ENCODE measurements at regions of chr20 and their contacts with region 1.

Region 1: DNA sequence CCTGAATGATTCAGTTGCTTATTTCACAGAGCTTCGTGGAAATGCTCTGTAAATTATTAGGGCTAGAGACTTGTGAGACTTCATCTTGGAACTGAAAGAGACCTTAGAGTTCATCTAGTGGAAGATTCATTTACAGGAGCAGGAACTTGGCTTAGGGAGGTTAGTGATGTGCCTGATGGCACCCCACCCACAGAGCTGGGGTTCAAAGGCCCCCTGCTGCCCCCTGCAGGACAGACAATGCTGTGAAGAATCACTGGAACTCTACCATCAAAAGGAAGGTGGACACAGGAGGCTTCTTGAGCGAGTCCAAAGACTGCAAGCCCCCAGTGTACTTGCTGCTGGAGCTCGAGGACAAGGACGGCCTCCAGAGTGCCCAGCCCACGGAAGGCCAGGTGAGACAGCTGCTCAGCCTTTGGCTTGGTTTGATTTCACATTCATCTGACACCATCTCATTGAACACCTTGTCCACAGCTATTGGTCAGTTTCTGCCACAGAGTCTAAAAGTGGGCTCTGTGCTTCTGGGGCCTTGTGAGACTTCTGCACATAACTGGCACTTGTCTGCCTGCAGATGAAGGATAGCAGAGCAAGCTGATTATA is 25.1 kb downstream of the MYBL2 start:
- DNase-seq: no peak
- ATAC-seq: peak; percentile 98
- H3K4me3 ChIP-seq: no peak overlapping the region
- H3K27ac ChIP-seq: no peak overlapping the region
- H3K4me1 ChIP-seq: no peaks in the 10 kb centered on the region
- H3K27me3 ChIP-seq: no peaks in the 10 kb centered on the region
- CTCF ChIP-seq: peak; percentile 74 to 79 (median 76)
- EP300 ChIP-seq: no peak
- POLR2A ChIP-seq: no peak
- RAD21 ChIP-seq: peak; percentile 88

Region 2: GRCh38 chr20:43472671-43473380 is 219.2 kb before region 1 on chr20:
- CTCF ChIA-PET with region 1: no interaction called
- POLR2A ChIA-PET with region 1: no interaction called
- RAD21 ChIA-PET with region 1: no interaction called
- SMC1A ChIA-PET with region 1: no interaction called
- in situ Hi-C with region 1: no loop called
- intact Hi-C with region 1: no loop called
- DNase-seq: no peak
- ATAC-seq: no peak
- H3K4me3 ChIP-seq: no peak overlapping the region
- H3K27ac ChIP-seq: no peak overlapping the region
- H3K4me1 ChIP-seq: no peaks in the 10 kb centered on the region
- H3K27me3 ChIP-seq: no peaks in the 10 kb centered on the region
- CTCF ChIP-seq: no peak
- EP300 ChIP-seq: no peak
- POLR2A ChIP-seq: no peak
- RAD21 ChIP-seq: no peak

Region 3: GRCh38 chr20:43537921-43538877 is 153.8 kb before region 1 on chr20:
- CTCF ChIA-PET with region 1: interaction called, 100 read pairs
- POLR2A ChIA-PET with region 1: interaction called, 4 read pairs
- RAD21 ChIA-PET with region 1: interaction called, 62 read pairs
- SMC1A ChIA-PET with region 1: interaction called, 70 read pairs
- in situ Hi-C with region 1: loop called (anchors 5 kb)
- intact Hi-C with region 1: loop called (anchors 1 kb)
- DNase-seq: no peak
- ATAC-seq: peak; percentile 85
- H3K4me3 ChIP-seq: no peak overlapping the region
- H3K27ac ChIP-seq: no peak overlapping the region
- H3K4me1 ChIP-seq: no peaks in the 10 kb centered on the region
- H3K27me3 ChIP-seq: no peaks in the 10 kb centered on the region; a peak in 2 of 4 replicates
- CTCF ChIP-seq: peak; percentile 83 to 92 (median 90)
- EP300 ChIP-seq: no peak
- POLR2A ChIP-seq: no peak
- RAD21 ChIP-seq: peak; percentile 82

Region 4: DNA sequence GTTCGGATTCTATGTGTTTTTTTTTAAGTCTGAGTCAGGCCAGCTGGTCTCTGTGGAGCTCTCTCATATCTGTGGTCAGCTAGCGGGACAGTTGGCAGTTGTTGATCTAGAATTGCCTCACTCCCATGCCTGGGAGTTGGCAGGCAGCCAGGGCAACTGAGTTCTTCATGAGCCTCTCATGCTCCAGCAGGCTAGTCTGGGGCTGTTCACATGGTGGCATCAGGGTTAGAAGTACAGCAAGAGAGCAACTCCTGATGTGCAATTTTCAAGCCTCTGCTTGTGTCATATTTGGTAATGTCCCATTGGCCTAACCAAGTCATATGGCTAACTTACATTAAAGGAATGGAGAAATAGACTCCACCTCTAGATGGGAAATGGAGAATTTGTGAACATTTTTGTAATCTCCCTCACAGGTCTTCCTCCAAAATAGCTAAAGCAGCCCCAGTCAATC is 108.0 kb before region 1 on chr20:
- CTCF ChIA-PET with region 1: interaction called, 11 read pairs
- POLR2A ChIA-PET with region 1: no interaction called
- RAD21 ChIA-PET with region 1: interaction called, 4 read pairs
- SMC1A ChIA-PET with region 1: interaction called, 3 read pairs
- in situ Hi-C with region 1: no loop called
- intact Hi-C with region 1: no loop called
- DNase-seq: no peak
- ATAC-seq: no peak
- H3K4me3 ChIP-seq: no peak overlapping the region
- H3K27ac ChIP-seq: no peak overlapping the region
- H3K4me1 ChIP-seq: no peaks in the 10 kb centered on the region
- H3K27me3 ChIP-seq: no peaks in the 10 kb centered on the region
- CTCF ChIP-seq: no peak
- EP300 ChIP-seq: no peak
- POLR2A ChIP-seq: no peak
- RAD21 ChIP-seq: no peak

Region 5: DNA sequence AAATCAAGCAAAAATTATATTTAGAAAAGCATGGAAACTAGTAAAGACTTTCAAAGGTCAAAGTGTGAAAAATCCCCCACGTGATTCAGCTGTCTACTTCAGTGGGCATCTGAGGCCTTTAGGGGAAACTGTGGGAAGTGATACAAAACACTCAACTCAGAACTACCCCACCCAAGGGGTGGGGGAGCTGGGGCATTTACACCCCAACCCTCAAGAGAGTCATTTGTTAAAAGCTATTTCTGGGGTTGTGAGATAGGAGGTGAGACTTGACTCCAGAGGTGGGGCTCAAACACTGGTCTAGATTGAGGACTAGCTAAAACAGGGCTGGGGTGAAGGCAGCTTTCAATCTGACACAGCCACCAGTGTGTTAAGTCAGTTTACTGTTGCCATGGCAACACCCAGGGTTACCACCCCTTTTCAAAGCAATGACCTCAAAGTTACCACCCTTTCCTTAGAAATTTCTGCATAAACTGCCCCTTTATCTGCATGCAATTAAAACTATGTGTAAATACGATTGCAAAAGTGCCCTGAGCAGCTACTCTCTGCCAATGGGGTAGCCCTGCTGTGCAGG is 44.6 kb after region 1 on chr20:
- CTCF ChIA-PET with region 1: interaction called, 6 read pairs
- POLR2A ChIA-PET with region 1: no interaction called
- RAD21 ChIA-PET with region 1: interaction called, 14 read pairs
- SMC1A ChIA-PET with region 1: interaction called, 3 read pairs
- in situ Hi-C with region 1: no loop called
- intact Hi-C with region 1: no loop called
- DNase-seq: peak; percentile 79
- ATAC-seq: peak; percentile 95
- H3K4me3 ChIP-seq: no peak overlapping the region
- H3K27ac ChIP-seq: no peak overlapping the region
- H3K4me1 ChIP-seq: peaks cover 38% of the 10 kb centered on the region
- H3K27me3 ChIP-seq: no peaks in the 10 kb centered on the region
- CTCF ChIP-seq: no peak
- EP300 ChIP-seq: peak; percentile 75 to 92
- POLR2A ChIP-seq: no peak
- RAD21 ChIP-seq: no peak

Region 6: GRCh38 chr20:43767686-43768474 is 75.9 kb after region 1 on chr20:
- CTCF ChIA-PET with region 1: no interaction called
- POLR2A ChIA-PET with region 1: no interaction called
- RAD21 ChIA-PET with region 1: no interaction called
- SMC1A ChIA-PET with region 1: no interaction called
- in situ Hi-C with region 1: no loop called
- intact Hi-C with region 1: no loop called
- DNase-seq: no peak
- ATAC-seq: peak; percentile 22
- H3K4me3 ChIP-seq: no peak overlapping the region
- H3K27ac ChIP-seq: no peak overlapping the region
- H3K4me1 ChIP-seq: no peaks in the 10 kb centered on the region
- H3K27me3 ChIP-seq: no peaks in the 10 kb centered on the region
- CTCF ChIP-seq: no peak
- EP300 ChIP-seq: no peak
- POLR2A ChIP-seq: no peak
- RAD21 ChIP-seq: no peak

Measured in GM12878 (cell line).